A549 (cell line): ENCODE measurements at regions of chr2 and their contacts with region 1.

Region 1: GRCh38 chr2:237572021-237572741 is 5.8 kb downstream of the PRLH start:
- DNase-seq: peak; percentile 92 to 95
- ATAC-seq: peak; percentile 89 to 99
- H3K4me3 ChIP-seq: no peak overlapping the region
- H3K27ac ChIP-seq: peak overlapping the region; percentile 55 to 71; a peak in 5 of 6 replicates
- H3K4me1 ChIP-seq: peaks cover 10% of the 10 kb centered on the region; the same call in 2 of the 3 replicates
- CTCF ChIP-seq: peak; percentile 98
- EP300 ChIP-seq: no peak
- POLR2A ChIP-seq: no peak
- RAD21 ChIP-seq: peak; percentile 99 to 100

Region 2: DNA sequence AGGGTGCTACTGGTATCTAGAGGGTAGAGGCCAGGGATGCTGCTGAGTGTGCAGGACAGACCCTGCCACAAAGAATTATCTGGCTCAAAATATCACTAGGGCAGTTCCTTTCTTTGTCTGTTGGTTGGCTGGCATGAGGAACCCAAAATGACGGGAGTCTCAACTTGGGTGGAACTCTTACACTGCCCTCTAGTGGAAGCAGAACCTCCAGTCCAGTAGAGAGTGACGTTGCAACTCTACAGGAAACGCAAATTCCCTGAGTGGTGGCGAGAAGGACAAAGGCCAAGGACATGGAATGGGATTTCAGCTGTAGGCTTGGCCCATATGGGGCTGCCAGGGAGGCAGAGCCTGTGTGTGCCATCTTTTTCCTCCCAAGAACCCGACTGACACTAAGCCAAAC is 439.4 kb before region 1 on chr2:
- CTCF ChIA-PET with region 1: interaction called, 11 read pairs
- POLR2A ChIA-PET with region 1: no interaction called
- DNase-seq: peak; percentile 15 to 72
- ATAC-seq: peak in 1 of 2 experiments; percentile 66; a peak in 3 of 6 replicates
- H3K4me3 ChIP-seq: no peak overlapping the region
- H3K27ac ChIP-seq: 0 out of 6 replicates have a peak overlapping the region, but pooled peaks of 1 of the 2 experiments have one; percentile 20
- H3K4me1 ChIP-seq: peaks cover 11% of the 10 kb centered on the region
- CTCF ChIP-seq: peak; percentile 26; the same call in 1 of the 3 replicates
- EP300 ChIP-seq: no peak
- POLR2A ChIP-seq: no peak
- RAD21 ChIP-seq: peak; percentile 18 to 40; a peak in 1 of 5 replicates

Region 3: DNA sequence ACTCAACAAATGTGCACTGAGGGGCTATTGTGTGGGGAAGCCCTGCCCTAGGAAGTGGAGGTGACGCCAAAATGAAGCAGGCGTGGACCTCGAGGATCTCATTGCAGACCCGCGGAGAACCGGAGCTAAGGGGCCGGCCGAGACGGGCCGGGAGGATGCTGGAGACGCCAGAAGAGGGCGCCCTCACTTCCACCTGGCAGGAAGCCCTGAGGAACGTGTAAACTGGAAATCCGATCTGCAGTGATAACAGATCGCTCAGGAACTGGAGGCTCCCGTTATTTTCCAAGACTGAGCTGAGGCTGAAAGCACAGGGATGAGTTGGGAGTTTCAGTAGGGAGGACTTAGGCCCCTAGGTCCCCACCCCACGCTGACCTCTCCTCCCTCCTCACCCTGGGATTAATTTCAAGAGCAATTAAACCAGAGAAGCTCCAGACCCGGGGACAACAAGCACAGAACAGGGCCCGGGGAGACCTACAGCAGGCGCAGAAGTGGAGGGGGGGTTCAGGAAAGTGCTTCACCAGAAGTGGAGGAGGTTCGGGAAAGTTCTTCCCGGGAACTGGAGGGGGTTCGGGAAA is 150.6 kb before region 1 on chr2:
- CTCF ChIA-PET with region 1: interaction called, 72 read pairs
- POLR2A ChIA-PET with region 1: no interaction called
- DNase-seq: peak; percentile 71 to 85
- ATAC-seq: peak; percentile 92 to 98
- H3K4me3 ChIP-seq: 0 out of 3 replicates have a peak overlapping the region, but pooled peaks have one; percentile 22
- H3K27ac ChIP-seq: peak overlapping the region; percentile 78 to 83
- H3K4me1 ChIP-seq: peaks cover 9% of the 10 kb centered on the region
- CTCF ChIP-seq: peak; percentile 85
- EP300 ChIP-seq: no peak
- POLR2A ChIP-seq: no peak
- RAD21 ChIP-seq: peak; percentile 73 to 75

Region 4: DNA sequence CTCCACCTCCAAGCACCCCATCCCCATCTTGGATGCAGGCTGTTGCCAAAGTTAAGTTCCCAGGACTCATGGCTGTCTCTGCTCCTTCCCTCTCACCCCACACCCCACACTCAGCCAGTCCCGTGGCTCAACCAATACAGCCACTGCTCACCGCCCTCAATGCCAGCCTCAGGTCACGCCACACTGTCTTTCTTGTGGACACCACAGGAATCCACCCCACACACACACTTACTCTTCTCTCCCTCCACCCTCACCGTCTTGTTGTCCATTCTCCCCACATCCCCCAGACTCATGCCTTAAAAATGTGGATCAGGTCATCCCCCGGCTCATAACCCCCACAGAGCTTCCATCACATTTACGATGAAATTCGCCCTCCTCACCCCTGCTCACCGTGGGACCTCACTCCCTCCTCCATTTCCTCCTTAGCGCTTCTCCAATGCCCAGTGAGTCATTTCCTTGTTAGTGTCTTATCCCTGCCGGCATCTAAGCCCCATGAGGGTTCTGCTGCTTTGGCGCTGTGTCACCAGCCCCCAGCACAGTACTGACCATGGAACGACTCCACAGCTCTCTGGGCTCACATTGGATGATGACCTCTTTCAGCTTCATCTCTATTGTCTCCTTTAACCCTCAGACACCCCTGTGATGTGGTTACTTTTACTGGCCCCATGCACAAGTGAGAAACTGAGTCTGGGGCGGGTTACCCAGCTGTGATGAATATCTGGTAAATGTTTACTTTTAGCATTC is 71.3 kb before region 1 on chr2:
- CTCF ChIA-PET with region 1: interaction called, 26 read pairs
- POLR2A ChIA-PET with region 1: interaction called, 4 read pairs
- DNase-seq: peak; percentile 96 to 99
- ATAC-seq: peak; percentile 85 to 86
- H3K4me3 ChIP-seq: peak overlapping the region; percentile 21; the same call in 1 of the 3 replicates
- H3K27ac ChIP-seq: peak overlapping the region; percentile 97 to 98
- H3K4me1 ChIP-seq: peaks cover 94% of the 10 kb centered on the region
- CTCF ChIP-seq: no peak
- EP300 ChIP-seq: peak; percentile 99 to 100
- POLR2A ChIP-seq: no peak
- RAD21 ChIP-seq: peak; percentile 16 to 52; a peak in 3 of 5 replicates

Region 5: DNA sequence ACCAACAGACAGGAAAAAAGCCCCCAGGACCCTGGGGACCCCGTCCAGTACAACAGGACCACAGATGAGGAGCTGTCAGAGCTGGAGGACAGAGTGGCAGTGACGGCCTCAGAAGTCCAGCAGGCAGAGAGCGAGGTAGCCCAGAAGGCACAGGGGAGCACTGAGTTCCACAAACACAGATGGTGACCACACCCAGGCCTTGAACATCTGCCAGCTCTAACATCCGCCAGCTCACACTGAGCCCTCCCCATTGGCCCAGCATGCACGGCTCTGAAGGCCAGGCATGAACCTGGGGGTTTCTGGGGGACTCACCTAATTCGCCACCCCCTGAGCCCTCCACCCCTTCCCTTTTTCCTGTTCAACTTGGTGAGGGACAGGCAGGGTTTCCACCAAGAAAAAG is 31.4 kb before region 1 on chr2:
- CTCF ChIA-PET with region 1: interaction called, 12 read pairs
- POLR2A ChIA-PET with region 1: no interaction called
- DNase-seq: peak in 1 of 2 experiments; percentile 42
- ATAC-seq: peak; percentile 10 to 49; a peak in 5 of 6 replicates
- H3K4me3 ChIP-seq: no peak overlapping the region
- H3K27ac ChIP-seq: peak overlapping the region; percentile 50 to 70; a peak in 5 of 6 replicates
- H3K4me1 ChIP-seq: peaks cover 47% of the 10 kb centered on the region
- CTCF ChIP-seq: no peak
- EP300 ChIP-seq: no peak
- POLR2A ChIP-seq: no peak
- RAD21 ChIP-seq: no peak

Region 6: GRCh38 chr2:237603718-237604362 is 31.7 kb after region 1 on chr2:
- CTCF ChIA-PET with region 1: interaction called, 19 read pairs
- POLR2A ChIA-PET with region 1: no interaction called
- DNase-seq: no peak
- ATAC-seq: no peak
- H3K4me3 ChIP-seq: no peak overlapping the region
- H3K27ac ChIP-seq: no peak overlapping the region
- H3K4me1 ChIP-seq: no peaks in the 10 kb centered on the region
- CTCF ChIP-seq: no peak
- EP300 ChIP-seq: no peak
- POLR2A ChIP-seq: no peak
- RAD21 ChIP-seq: no peak